CD8-positive, alpha-beta T cell (primary cell): ENCODE measurements at regions of chr16 and their contacts with region 1.

Region 1: DNA sequence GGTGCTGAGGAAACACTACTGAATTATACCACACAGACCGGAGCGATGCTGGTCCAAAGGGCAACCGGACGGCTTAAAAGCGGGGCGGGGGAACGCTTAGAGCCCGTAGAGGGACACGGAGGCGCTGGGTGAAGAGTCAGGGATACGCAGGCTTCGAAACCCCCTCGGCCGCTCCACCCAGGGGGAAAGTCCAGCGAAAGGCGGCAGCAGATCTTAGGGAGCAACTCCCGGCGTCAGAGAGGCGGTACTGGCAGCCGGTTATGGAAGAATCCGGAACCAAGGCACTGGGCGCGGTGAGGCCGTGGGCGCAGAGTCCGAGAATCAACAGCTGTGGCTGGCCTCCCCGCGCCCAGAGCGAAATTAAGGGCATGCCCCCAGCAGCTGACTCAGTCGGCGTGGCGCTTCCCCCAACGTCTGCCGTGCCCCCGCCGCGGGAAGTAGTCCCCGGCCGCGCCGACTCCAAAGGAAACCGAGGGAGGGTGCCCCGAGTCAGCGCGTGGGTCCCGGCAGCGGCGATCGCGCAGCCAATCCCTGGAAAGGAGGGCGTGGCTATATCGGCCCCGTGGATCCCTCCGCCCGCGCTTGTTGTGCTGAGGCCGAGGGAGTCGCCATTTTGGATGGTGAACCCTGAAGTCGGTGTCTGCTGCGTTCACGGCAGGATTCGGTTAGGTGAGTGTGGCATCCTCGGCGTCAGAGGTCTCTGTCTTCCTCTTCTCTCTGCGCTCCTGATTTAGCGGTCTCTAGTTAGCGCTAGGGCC is at the start of gene IST1:
- DNase-seq: peak; percentile 95 to 99 (median 98)
- ATAC-seq: peak; percentile 94
- H3K4me3 ChIP-seq: peak within 1 kb of the TSS; percentile 98 to 99
- H3K4me3 Mint-ChIP-seq: peak within 1 kb of the TSS; percentile 97
- H3K27ac ChIP-seq: peak within 1 kb of the TSS; percentile 97
- H3K27ac Mint-ChIP-seq: peak within 1 kb of the TSS; percentile 97
- H3K4me1 ChIP-seq: peaks cover 34% of the 10 kb centered on the region
- H3K4me1 Mint-ChIP-seq: peaks cover 32% of the 10 kb centered on the region
- H3K27me3 ChIP-seq: no peaks in the 10 kb centered on the region
- H3K27me3 Mint-ChIP-seq: no peaks in the 10 kb centered on the region
- CTCF ChIP-seq: no peak
- total RNA-seq, gene IST1: 460 to 476 TPM

Region 2: DNA sequence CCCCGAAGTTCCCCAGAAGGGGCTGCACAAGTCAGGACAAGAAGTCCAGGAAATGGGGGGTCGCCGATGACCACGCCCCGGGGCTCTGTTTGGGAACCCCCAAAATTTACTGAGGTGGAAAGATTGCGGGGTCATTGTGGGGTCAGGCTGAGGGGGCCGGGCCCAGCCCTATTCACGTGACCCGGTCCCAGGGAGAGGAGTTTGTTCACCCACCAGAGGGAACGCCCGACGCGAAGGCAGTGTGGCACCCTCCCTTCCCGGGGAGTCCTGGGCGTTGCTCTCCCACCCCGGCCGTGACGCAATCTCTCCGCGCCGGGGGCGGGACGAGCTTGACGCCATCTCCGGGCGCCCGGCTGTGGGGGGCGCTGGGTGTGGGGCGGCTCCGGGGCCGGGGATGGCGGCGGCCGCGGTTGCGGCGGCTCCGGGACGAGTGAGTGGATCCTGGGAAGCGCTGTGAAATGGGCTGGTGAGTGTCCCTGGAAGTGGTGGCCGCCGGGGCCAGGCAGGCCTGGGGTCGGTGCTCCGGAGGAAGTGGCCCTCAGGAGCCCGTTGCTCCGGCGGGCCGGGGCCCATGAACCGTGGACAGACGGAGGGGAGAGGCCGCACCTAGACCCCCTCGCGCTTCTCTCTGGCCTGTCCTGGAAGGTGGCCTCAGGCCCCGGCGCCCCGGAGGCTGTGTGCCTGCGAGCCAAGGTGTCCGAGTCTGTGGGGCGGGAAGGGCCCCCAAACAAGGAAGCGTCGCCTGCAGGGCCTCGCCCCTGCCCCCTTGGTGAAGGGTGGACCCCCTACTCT is 49.3 kb before region 1 on chr16 and contains the start of gene ATXN1L:
- CTCF ChIA-PET with region 1: interaction called, 3 read pairs
- POLR2A ChIA-PET with region 1: interaction called, 11 read pairs
- intact Hi-C with region 1: loop called (anchors 1 kb)
- DNase-seq: peak; percentile 88 to 98 (median 93)
- ATAC-seq: peak; percentile 94
- H3K4me3 ChIP-seq: peak within 1 kb of the TSS; percentile 87 to 97
- H3K4me3 Mint-ChIP-seq: peak within 1 kb of the TSS; percentile 90
- H3K27ac ChIP-seq: peak within 1 kb of the TSS; percentile 88 to 93
- H3K27ac Mint-ChIP-seq: peak within 1 kb of the TSS; percentile 94
- H3K4me1 ChIP-seq: peaks cover 16% of the 10 kb centered on the region
- H3K4me1 Mint-ChIP-seq: peaks cover 39% of the 10 kb centered on the region
- H3K27me3 ChIP-seq: no peaks in the 10 kb centered on the region
- H3K27me3 Mint-ChIP-seq: no peaks in the 10 kb centered on the region
- CTCF ChIP-seq: peak; percentile 12
- total RNA-seq, gene ATXN1L: 64.9 to 67.4 TPM

Region 3: DNA sequence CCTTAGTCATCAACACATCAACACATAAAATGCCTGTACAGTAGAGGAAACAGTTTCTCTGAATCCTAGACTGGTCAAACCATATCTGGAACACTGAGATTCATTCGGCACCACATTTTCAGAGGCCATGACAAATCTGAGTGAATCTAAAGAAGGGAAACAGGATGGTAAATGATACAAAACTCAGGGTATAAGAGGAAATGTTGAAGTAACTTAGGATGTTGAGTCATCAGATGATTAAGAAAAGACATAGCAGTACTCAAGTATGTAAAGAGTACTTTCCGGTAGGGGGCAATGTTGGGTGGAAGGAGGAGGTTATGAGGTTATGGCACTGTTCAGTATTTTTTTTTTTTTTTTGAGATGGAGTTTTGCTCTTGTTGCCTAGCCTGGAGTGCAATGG is 635.3 kb after region 1 on chr16:
- CTCF ChIA-PET with region 1: no interaction called
- POLR2A ChIA-PET with region 1: no interaction called
- intact Hi-C with region 1: no loop called
- DNase-seq: no peak
- ATAC-seq: no peak
- H3K4me3 ChIP-seq: no peak overlapping the region
- H3K4me3 Mint-ChIP-seq: no peak overlapping the region
- H3K27ac ChIP-seq: no peak overlapping the region
- H3K27ac Mint-ChIP-seq: no peak overlapping the region
- H3K4me1 ChIP-seq: no peaks in the 10 kb centered on the region
- H3K4me1 Mint-ChIP-seq: no peaks in the 10 kb centered on the region
- H3K27me3 ChIP-seq: no peaks in the 10 kb centered on the region
- H3K27me3 Mint-ChIP-seq: no peaks in the 10 kb centered on the region
- CTCF ChIP-seq: no peak